ENCODE measurements at regions of chr20 and their contacts with region 1.

Region 1: DNA sequence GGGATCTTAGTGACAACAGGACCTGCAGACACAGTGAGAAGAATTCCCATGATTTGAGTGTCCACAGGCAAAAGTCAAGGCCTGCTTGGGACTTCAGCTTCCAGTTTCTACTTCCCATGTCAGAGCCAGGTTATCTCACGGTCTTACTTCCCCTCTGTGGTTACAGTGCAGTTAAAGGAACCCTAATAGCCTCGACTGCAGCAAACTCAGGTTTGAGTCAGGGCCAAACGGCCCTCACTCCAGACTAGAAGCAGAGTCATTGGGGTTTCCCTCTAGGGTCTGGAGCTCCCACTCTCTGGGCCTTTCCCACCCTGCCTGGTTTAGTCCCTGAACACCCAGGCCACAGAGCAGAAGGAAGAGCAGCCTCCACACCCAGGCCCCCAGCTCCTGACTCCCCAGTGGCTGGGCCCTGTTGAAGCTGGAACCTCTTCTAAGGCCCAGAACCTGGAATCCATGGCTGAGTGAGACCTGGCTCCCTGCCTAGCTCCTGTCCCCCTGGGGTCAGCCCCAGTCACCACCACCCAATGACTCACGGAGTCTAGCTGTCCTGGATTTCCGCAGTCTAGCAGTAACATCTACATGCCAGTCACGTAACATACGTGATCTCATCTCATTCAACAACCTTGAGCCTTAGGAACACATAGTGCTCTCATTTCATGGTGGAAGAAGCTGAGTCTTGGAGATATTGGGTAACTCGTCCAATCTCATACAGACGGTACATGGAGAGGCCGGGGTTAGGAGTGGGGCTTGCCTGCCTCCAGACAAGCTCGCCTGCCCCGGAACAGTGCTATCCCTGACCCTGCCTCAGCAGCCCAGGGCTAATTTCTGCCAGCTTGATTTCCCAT is 9.2 kb upstream of the GHRH start:
- DNase-seq: no peak
- ATAC-seq: peak in 2 of 4 donors; percentile 49 to 57
- H3K4me3 ChIP-seq: no peak overlapping the region
- H3K27ac ChIP-seq: peak overlapping the region in 2 of 4 donors; percentile 22 to 41
- H3K4me1 ChIP-seq: no peaks in the 10 kb centered on the region
- H3K27me3 ChIP-seq: no peaks in the 10 kb centered on the region
- CTCF ChIP-seq: no peak

Region 2: DNA sequence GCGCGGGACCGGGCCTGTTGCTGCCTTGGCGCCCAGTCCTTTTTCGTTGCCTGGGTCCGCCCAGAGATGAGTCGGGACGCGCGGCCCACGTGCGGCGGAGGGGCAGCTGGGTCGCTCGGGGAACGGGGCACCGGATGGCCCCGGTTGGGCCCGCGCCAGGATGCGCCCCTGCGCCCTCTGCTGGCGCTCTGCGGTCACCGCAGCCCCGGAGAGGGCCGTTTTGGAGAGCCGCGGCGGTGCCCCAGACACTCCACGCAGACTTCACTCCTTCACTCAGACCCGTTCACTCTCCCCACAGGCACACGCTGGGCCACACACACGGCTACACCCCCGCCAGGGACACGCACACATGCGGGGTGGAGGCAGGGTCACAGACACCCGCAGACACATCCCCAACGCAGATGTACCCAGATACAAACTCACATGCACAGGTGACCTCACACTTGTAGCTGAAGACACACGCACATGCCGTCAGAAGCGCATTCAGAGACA is 113.9 kb after region 1 on chr20:
- intact Hi-C with region 1: loop called in 2 of 3 experiments (anchors 5 kb)
- DNase-seq: peak in 3 of 6 donors; percentile 62 to 85 (median 80)
- ATAC-seq: peak; percentile 49 to 78 (median 76)
- H3K4me3 ChIP-seq: peak overlapping the region in 1 of 4 donors; percentile 29
- H3K27ac ChIP-seq: no peak overlapping the region
- H3K4me1 ChIP-seq: peaks cover 0 to 15% (median 12%) of the 10 kb centered on the region in 3 donors
- H3K27me3 ChIP-seq: no peaks in the 10 kb centered on the region
- CTCF ChIP-seq: peak; percentile 80 to 90 (median 83)

Region 3: GRCh38 chr20:37417617-37418467 is 147.0 kb after region 1 on chr20:
- intact Hi-C with region 1: no loop called
- DNase-seq: no peak
- ATAC-seq: no peak
- H3K4me3 ChIP-seq: no peak overlapping the region
- H3K27ac ChIP-seq: no peak overlapping the region
- H3K4me1 ChIP-seq: no peaks in the 10 kb centered on the region
- H3K27me3 ChIP-seq: no peaks in the 10 kb centered on the region
- CTCF ChIP-seq: no peak

Region 4: GRCh38 chr20:37430788-37431460 is 160.1 kb after region 1 on chr20:
- intact Hi-C with region 1: no loop called
- DNase-seq: no peak
- ATAC-seq: no peak
- H3K4me3 ChIP-seq: no peak overlapping the region
- H3K27ac ChIP-seq: no peak overlapping the region
- H3K4me1 ChIP-seq: no peaks in the 10 kb centered on the region
- H3K27me3 ChIP-seq: no peaks in the 10 kb centered on the region
- CTCF ChIP-seq: no peak

Region 5: GRCh38 chr20:37627060-37627769 is 356.4 kb after region 1 on chr20:
- intact Hi-C with region 1: no loop called
- DNase-seq: peak in 4 of 6 donors; percentile 12 to 41 (median 29)
- ATAC-seq: peak in 2 of 4 donors; percentile 63 to 75
- H3K4me3 ChIP-seq: no peak overlapping the region
- H3K27ac ChIP-seq: no peak overlapping the region
- H3K4me1 ChIP-seq: no peaks in the 10 kb centered on the region
- H3K27me3 ChIP-seq: no peaks in the 10 kb centered on the region
- CTCF ChIP-seq: no peak